ENCODE measurements at regions of chr5 and their contacts with region 1.

Region 1: DNA sequence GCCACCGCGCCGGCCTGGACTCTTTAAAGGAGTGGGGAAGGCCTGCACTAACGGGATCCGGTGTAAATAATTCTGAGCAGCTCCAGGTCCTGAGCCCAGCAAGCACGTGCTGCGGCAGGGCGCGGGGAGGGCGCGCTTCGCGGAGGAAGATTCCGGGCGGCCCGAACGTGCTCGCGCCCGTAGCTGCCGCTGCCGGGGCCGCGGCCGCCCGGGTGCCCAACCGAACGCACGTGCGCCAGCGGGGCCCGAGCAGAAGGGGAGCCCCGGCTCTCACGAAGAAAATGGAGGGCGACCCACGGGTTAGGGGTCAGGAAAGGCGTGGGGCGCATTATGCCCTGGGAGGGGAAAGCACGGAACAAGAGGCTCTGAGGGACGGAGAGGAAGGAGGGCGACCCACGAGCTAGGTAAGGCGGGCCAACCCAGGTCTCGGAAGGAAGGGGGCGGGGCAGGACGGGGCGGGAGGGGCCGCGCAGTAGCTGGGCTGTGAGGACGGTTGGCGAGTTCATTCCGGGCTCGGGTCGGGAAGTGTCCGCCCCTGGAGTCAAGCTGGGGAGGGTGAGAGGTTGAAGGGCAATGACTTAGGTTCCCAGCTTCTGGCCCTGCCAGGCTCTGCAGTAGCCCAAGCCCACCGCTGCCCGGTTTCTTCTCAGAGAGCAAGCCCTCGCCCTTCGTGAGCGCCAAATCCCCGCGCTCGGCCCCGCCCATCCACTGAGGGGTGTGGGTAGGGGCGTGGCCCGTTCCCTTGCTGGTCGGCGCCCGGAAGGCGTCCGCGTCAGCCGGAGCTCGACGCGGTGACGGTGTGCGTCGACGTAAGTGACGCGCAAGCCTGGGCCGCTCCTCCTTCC is at the start of gene ZNF131:
- DNase-seq: peak; percentile 97
- H3K4me3 Mint-ChIP-seq: peak within 1 kb of the TSS; percentile 97
- H3K27ac Mint-ChIP-seq: peak within 1 kb of the TSS; percentile 96
- H3K4me1 Mint-ChIP-seq: peaks cover 33% of the 10 kb centered on the region
- H3K27me3 Mint-ChIP-seq: no peaks in the 10 kb centered on the region
- total RNA-seq, gene ZNF131: 27.3 to 27.8 TPM

Region 2: DNA sequence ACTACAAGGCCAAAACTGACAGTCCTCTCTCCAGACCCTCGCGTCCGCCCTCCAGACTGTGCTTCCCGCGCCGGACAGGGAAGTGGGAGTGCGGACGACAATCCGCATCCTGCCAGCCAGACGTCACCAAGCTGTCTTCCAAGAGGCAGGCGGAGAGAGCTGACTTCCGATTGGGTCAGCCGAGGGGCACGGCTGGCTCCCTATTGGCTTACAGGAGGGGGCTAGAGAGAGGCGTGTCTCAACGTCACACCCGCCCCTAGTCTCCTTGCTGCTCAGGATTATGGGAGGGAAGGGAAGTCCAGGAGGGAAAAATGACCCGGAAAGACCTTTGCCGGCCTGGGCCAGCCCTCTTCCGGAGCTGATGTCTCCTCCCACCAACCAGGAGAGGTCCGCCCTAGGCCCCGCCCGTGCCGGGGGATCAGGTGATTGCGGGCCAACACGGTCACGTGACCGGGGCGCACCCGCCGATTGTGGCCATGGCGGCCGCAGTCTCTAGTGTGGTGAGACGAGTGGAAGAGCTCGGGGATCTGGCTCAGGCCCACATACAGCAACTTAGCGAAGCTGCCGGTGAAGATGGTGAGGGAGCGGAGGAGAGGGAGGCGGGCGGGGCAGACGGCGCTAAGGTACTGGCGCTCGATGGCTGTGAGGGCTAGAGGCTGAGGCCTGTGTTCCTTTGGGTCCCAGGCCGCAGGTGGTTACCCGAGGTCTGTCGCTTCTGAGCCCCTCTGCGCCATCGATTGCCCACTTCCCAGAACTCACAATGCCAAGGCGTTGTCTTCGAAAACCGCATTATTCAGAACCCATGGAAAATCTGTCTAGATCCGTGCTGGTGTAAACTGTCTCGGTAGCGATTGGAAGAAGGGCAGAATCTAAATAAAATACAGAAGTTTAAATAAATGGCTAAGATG is 1216.8 kb before region 1 on chr5 and contains the start of gene RIMOC1:
- CTCF ChIA-PET with region 1: no interaction called
- POLR2A ChIA-PET with region 1: no interaction called
- intact Hi-C with region 1: loop called (anchors 10 kb)
- DNase-seq: peak; percentile 99
- H3K4me3 Mint-ChIP-seq: peak within 1 kb of the TSS; percentile 91
- H3K27ac Mint-ChIP-seq: peak within 1 kb of the TSS; percentile 93
- H3K4me1 Mint-ChIP-seq: peaks cover 37% of the 10 kb centered on the region
- H3K27me3 Mint-ChIP-seq: peaks cover 2% of the 10 kb centered on the region
- total RNA-seq, gene RIMOC1: 25.0 to 25.8 TPM

Region 3: GRCh38 chr5:43019614-43020293 is 101.2 kb before region 1 on chr5:
- CTCF ChIA-PET with region 1: interaction called, 7 read pairs
- POLR2A ChIA-PET with region 1: no interaction called
- intact Hi-C with region 1: loop called (anchors 5 kb)
- DNase-seq: peak; percentile 91
- H3K4me3 Mint-ChIP-seq: peak overlapping the region; percentile 97
- H3K27ac Mint-ChIP-seq: peak overlapping the region; percentile 98
- H3K4me1 Mint-ChIP-seq: peaks cover 32% of the 10 kb centered on the region
- H3K27me3 Mint-ChIP-seq: no peaks in the 10 kb centered on the region

Region 4: GRCh38 chr5:43110606-43111442 is 10.1 kb before region 1 on chr5:
- CTCF ChIA-PET with region 1: interaction called, 58 read pairs
- POLR2A ChIA-PET with region 1: interaction called, 23 read pairs
- intact Hi-C with region 1: loop called (anchors 1 kb)
- DNase-seq: peak; percentile 64
- H3K4me3 Mint-ChIP-seq: peak overlapping the region; percentile 20
- H3K27ac Mint-ChIP-seq: peak overlapping the region; percentile 35
- H3K4me1 Mint-ChIP-seq: peaks cover 40% of the 10 kb centered on the region
- H3K27me3 Mint-ChIP-seq: no peaks in the 10 kb centered on the region

Region 5: DNA sequence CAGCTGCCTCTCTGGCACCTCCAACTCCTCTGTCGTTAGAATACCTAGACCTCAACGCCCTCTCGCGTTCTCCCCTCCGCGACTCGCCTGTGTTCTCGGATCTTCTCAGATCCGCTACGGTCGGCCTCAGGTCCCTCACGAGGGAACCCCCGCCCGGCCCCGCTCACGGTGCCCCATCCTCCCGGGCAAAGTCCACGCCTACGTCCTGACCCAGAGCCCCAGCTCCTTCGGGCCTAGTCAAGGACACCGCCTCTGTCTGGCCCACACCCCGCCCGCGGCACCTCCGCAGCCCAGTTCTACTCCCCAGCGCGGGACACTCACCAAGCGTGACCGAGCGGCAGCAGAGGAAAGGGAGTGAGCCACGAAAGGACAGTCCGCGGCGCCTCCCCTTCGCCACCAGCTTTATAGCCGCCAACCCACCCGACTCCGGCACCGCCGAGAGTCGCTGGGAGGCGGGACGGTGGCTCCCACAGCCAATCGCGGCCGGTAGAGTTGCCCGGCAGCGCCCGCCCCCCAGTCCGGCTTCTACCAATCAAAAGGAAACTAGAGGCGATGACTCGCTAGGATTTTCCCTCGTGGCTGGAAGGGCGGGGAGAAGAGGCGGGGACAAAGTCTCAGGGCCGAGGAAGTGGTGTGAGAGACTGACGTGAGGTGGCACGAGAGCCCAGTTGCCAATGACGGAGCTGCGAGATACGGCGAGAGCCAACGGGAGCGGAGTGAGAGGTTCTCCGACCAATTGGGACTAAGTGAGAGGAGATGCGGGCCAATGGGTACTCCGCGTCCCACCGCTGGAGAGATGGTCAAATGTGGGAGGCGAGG is 192.3 kb after region 1 on chr5 and contains the start of gene HMGCS1:
- CTCF ChIA-PET with region 1: interaction called, 11 read pairs
- POLR2A ChIA-PET with region 1: interaction called, 25 read pairs
- intact Hi-C with region 1: loop called (anchors 1 kb)
- DNase-seq: peak; percentile 99
- H3K4me3 Mint-ChIP-seq: peak within 1 kb of the TSS; percentile 96
- H3K27ac Mint-ChIP-seq: peak within 1 kb of the TSS; percentile 94
- H3K4me1 Mint-ChIP-seq: peaks cover 72% of the 10 kb centered on the region
- H3K27me3 Mint-ChIP-seq: peaks cover 2% of the 10 kb centered on the region
- total RNA-seq, gene HMGCS1: 158 to 162 TPM

Region 6: GRCh38 chr5:43602461-43603343 is 481.8 kb after region 1 on chr5 and contains the start of gene NNT:
- CTCF ChIA-PET with region 1: interaction called, 3 read pairs
- POLR2A ChIA-PET with region 1: interaction called, 7 read pairs
- intact Hi-C with region 1: loop called (anchors 5 kb)
- DNase-seq: peak; percentile 84
- H3K4me3 Mint-ChIP-seq: peak within 1 kb of the TSS; percentile 97
- H3K27ac Mint-ChIP-seq: peak within 1 kb of the TSS; percentile 93
- H3K4me1 Mint-ChIP-seq: peaks cover 35% of the 10 kb centered on the region
- H3K27me3 Mint-ChIP-seq: no peaks in the 10 kb centered on the region
- total RNA-seq, gene NNT: 96.6 to 99.9 TPM

Region 7: DNA sequence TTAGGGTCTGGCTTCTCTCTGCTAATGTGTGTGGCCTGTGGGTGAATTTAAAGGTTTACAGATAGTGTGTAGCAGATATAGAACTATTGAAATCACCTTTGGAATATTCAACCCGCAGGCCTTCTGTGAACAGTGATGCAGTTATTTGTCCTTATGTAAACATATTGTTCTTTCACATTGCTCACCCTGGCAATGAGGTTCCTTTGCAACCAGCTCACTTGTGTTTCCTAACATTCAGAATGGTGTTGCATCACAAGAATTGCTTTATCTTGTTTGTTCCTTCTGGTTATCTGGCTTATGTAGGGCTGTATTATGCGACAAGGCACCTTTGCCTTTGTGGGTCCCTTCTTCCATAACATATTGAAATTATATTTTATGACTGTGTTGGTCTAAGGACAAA is 852.4 kb after region 1 on chr5:
- CTCF ChIA-PET with region 1: no interaction called
- POLR2A ChIA-PET with region 1: no interaction called
- intact Hi-C with region 1: no loop called
- DNase-seq: no peak
- H3K4me3 Mint-ChIP-seq: no peak overlapping the region
- H3K27ac Mint-ChIP-seq: no peak overlapping the region
- H3K4me1 Mint-ChIP-seq: no peaks in the 10 kb centered on the region
- H3K27me3 Mint-ChIP-seq: no peaks in the 10 kb centered on the region

Measured in activated CD4-positive, alpha-beta memory T cell treated with anti-CD3 and anti-CD28 coated beads for 36 hours (primary cell).